Activated T-helper 1 cell treated with anti-CD3 and anti-CD28 coated beads, Interleukin-12 subunit alpha, Interleukin-12 subunit beta, Interleukin-2, Interleukin-4 antibody, amounts not matched to agents 30 ng/mL and 10 ng/mL and 1 ng/mL, durations not matched to agents 14 hours and 24 hours and 36 hours (primary cell): ENCODE measurements at regions of chr16 and their contacts with region 1.

Region 1: GRCh38 chr16:84672276-84673202 is 24.2 kb downstream of the KLHL36 start:
- DNase-seq: peak; percentile 66
- H3K4me3 Mint-ChIP-seq: no peak overlapping the region
- H3K27ac Mint-ChIP-seq: no peak overlapping the region
- H3K4me1 Mint-ChIP-seq: peaks cover 8% of the 10 kb centered on the region
- H3K27me3 Mint-ChIP-seq: peaks cover 14% of the 10 kb centered on the region

Region 2: GRCh38 chr16:84647828-84648594 is 24.5 kb before region 1 on chr16 and contains the start of gene KLHL36:
- intact Hi-C with region 1: loop called (anchors 2 kb)
- DNase-seq: peak; percentile 76
- H3K4me3 Mint-ChIP-seq: peak within 1 kb of the TSS; percentile 95
- H3K27ac Mint-ChIP-seq: peak within 1 kb of the TSS; percentile 92
- H3K4me1 Mint-ChIP-seq: peaks cover 48% of the 10 kb centered on the region
- H3K27me3 Mint-ChIP-seq: peaks cover 14% of the 10 kb centered on the region
- total RNA-seq, gene KLHL36: 39.3 and 42.6 TPM in 2 replicates

Region 3: GRCh38 chr16:84699712-84700445 is 27.3 kb after region 1 on chr16 and contains the start of gene USP10:
- intact Hi-C with region 1: loop called (anchors 1 kb)
- DNase-seq: peak; percentile 84
- H3K4me3 Mint-ChIP-seq: peak within 1 kb of the TSS; percentile 99
- H3K27ac Mint-ChIP-seq: peak within 1 kb of the TSS; percentile 96
- H3K4me1 Mint-ChIP-seq: peaks cover 38% of the 10 kb centered on the region
- H3K27me3 Mint-ChIP-seq: peaks cover 4% of the 10 kb centered on the region
- total RNA-seq, gene USP10: 153 and 159 TPM in 2 replicates

Region 4: DNA sequence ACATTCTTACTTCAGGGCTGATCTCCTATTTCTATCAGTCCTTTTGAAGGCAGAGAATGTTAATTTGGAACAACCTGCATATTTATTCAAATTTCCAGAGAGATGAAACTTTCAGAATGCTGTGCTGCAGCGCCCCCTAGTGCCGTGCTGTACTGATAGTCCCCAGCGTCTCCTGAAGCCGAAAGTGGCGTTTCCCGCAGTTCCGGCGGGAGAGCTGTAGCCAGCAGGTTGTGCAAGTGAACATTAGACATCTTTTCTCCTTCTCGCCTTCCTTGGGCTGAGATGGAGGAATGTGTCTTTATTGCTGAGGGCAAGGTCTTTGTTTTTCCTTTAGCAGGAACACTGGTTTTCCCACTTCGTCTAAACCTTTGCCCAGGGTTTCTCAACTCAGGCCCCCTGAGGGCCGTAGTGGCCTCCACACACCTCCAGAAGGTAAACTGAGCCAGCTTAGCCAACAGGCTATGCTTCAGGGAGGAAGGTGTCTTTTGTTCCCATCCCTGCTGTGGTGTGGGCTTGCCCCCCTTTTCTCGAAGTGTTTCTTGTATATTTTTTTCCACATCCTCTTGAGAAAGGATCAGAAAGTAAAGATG is 53.6 kb after region 1 on chr16:
- intact Hi-C with region 1: loop called (anchors 1 kb)
- DNase-seq: peak; percentile 62
- H3K4me3 Mint-ChIP-seq: peak overlapping the region; percentile 45
- H3K27ac Mint-ChIP-seq: no peak overlapping the region
- H3K4me1 Mint-ChIP-seq: peaks cover 79% of the 10 kb centered on the region
- H3K27me3 Mint-ChIP-seq: no peaks in the 10 kb centered on the region

Region 5: DNA sequence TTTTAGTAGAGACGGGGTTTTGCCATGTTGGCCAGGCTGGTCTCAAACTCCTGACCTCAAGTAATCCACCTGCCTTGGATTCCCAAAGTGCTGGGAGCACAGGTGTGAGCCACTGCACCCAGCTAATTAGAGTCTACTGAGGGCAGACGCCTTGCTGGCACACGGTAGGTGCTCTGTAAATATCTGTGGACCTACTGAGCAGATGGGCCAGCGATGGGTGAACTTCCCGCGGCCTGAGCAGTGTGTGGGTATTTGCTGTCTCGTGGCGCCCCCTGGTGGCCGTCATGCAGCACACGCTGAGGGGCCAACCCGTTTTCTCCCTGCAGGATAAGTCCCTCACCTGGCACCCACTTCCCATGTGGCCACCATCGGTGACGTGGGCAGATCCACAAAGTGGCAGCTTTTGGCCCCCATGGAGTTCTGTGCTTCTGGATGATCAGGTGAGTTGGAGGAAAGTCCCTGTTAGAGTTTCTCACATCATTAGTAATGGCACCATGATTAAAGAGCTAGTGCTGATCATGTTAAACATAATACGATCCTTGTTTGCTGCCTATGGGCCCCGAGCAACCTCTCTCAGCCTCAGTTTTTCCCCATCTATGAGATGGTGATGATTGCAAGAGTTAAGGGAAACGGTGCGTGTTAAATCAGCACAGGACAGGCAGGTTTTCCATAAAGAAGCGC is 298.0 kb after region 1 on chr16:
- intact Hi-C with region 1: loop called (anchors 1 kb)
- DNase-seq: peak; percentile 62
- H3K4me3 Mint-ChIP-seq: no peak overlapping the region
- H3K27ac Mint-ChIP-seq: no peak overlapping the region
- H3K4me1 Mint-ChIP-seq: peaks cover 6% of the 10 kb centered on the region
- H3K27me3 Mint-ChIP-seq: peaks cover 2% of the 10 kb centered on the region